Activated CD4-positive, alpha-beta memory T cell treated with anti-CD3 and anti-CD28 coated beads, Interleukin-2, amount 10 ng/mL, durations not matched to agents 7 days and 5 days (primary cell): ENCODE measurements at regions of chr2 and their contacts with region 1.

Region 1: GRCh38 chr2:197209742-197210408 is 100.7 kb downstream of the ANKRD44 start:
- DNase-seq: peak; percentile 57
- H3K4me3 Mint-ChIP-seq: peak overlapping the region; percentile 15
- H3K27ac Mint-ChIP-seq: peak overlapping the region; percentile 91
- H3K4me1 Mint-ChIP-seq: peaks cover 96% of the 10 kb centered on the region
- H3K27me3 Mint-ChIP-seq: no peaks in the 10 kb centered on the region

Region 2: DNA sequence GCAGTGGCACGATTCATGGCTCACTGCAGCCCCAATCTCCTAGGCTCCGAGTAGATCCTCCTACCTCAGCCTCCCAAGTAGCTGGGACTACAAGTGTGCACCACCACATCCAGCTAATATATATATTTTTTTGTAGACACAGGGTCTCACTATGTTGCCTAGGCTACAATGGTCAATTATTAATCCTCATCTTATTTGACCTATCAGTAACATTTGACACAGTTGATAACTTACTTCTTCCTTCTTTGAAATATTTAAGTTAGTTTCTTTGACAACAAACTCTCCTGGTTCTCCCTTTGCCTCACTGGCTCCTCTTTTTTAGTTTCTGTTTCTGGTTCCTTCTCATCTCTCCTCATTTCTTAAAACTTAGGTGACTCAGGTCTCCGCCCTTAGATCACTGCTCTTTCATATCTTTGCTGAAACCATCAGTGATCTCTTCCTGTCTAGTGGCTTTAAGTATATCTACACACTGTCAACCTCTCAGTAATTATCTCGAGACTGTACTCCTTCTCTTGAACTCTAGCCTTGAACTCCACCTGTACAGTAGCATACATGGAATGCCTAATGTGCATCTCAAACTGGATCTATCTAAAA is 294.9 kb before region 1 on chr2:
- CTCF ChIA-PET with region 1: no interaction called
- POLR2A ChIA-PET with region 1: no interaction called
- DNase-seq: no peak
- H3K4me3 Mint-ChIP-seq: peak overlapping the region; percentile 55
- H3K27ac Mint-ChIP-seq: peak overlapping the region; percentile 95
- H3K4me1 Mint-ChIP-seq: peaks cover 54% of the 10 kb centered on the region
- H3K27me3 Mint-ChIP-seq: no peaks in the 10 kb centered on the region

Region 3: GRCh38 chr2:196926562-196927375 is 283.1 kb before region 1 on chr2 and contains the start of gene PGAP1:
- CTCF ChIA-PET with region 1: no interaction called
- POLR2A ChIA-PET with region 1: no interaction called
- DNase-seq: peak; percentile 89
- H3K4me3 Mint-ChIP-seq: peak within 1 kb of the TSS; percentile 93
- H3K27ac Mint-ChIP-seq: peak within 1 kb of the TSS; percentile 99
- H3K4me1 Mint-ChIP-seq: peaks cover 37% of the 10 kb centered on the region
- H3K27me3 Mint-ChIP-seq: no peaks in the 10 kb centered on the region
- total RNA-seq, gene PGAP1: 53.6 to 63.6 TPM

Region 4: GRCh38 chr2:197191177-197191939 is 18.5 kb before region 1 on chr2:
- CTCF ChIA-PET with region 1: interaction called, 17 read pairs
- POLR2A ChIA-PET with region 1: interaction called, 123 read pairs
- DNase-seq: no peak
- H3K4me3 Mint-ChIP-seq: no peak overlapping the region
- H3K27ac Mint-ChIP-seq: peak overlapping the region; percentile 32
- H3K4me1 Mint-ChIP-seq: peaks cover 72% of the 10 kb centered on the region
- H3K27me3 Mint-ChIP-seq: no peaks in the 10 kb centered on the region

Region 5: GRCh38 chr2:197198890-197199289 is 11.0 kb before region 1 on chr2:
- CTCF ChIA-PET with region 1: interaction called, 10 read pairs
- POLR2A ChIA-PET with region 1: interaction called, 123 read pairs
- DNase-seq: peak; percentile 94
- H3K4me3 Mint-ChIP-seq: peak overlapping the region; percentile 79
- H3K27ac Mint-ChIP-seq: peak overlapping the region; percentile 96
- H3K4me1 Mint-ChIP-seq: peaks cover 85% of the 10 kb centered on the region
- H3K27me3 Mint-ChIP-seq: no peaks in the 10 kb centered on the region

Region 6: GRCh38 chr2:197239434-197239833 is 29.6 kb after region 1 on chr2:
- CTCF ChIA-PET with region 1: interaction called, 5 read pairs
- POLR2A ChIA-PET with region 1: interaction called, 13 read pairs
- DNase-seq: no peak
- H3K4me3 Mint-ChIP-seq: peak overlapping the region; percentile 73
- H3K27ac Mint-ChIP-seq: peak overlapping the region; percentile 89
- H3K4me1 Mint-ChIP-seq: peaks cover 85% of the 10 kb centered on the region
- H3K27me3 Mint-ChIP-seq: no peaks in the 10 kb centered on the region

Region 7: DNA sequence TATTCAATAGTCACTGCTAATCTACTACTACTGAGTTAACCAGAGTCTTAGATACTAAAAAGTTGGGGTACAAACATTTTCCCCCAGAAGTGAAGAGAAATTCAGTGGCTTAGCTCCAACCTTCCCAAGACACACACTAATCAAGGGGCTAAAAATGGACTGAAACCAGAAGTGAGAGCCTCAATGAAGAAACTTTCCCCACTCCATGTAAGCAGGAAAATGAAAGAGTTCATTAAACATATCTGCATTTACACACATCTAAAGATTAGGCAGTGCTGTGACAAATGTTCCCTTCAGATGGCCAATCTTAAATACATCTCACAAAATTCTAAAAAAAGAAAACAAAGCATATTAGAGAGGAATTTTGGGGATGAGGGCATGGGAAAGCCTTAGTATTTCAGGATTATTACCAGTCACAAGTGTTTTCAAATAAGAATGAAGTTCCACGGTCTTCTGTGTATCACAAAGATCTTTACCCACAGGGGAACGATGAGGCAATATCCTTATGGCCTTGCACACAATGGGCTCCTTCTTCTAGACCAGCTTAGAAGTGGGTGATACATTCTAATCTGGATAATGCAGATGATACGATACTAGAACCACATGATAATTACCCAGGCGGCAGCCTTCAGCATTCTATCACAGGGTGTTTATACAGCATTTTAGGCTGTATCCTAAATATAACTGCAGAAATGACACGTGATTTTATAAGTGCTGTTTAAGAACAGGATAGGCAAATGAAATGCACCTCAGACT is 83.6 kb after region 1 on chr2:
- CTCF ChIA-PET with region 1: no interaction called
- POLR2A ChIA-PET with region 1: interaction called, 16 read pairs
- DNase-seq: peak; percentile 32
- H3K4me3 Mint-ChIP-seq: peak overlapping the region; percentile 73
- H3K27ac Mint-ChIP-seq: peak overlapping the region; percentile 96
- H3K4me1 Mint-ChIP-seq: peaks cover 90% of the 10 kb centered on the region
- H3K27me3 Mint-ChIP-seq: no peaks in the 10 kb centered on the region

Region 8: GRCh38 chr2:197378494-197379307 is 168.8 kb after region 1 on chr2:
- CTCF ChIA-PET with region 1: no interaction called
- POLR2A ChIA-PET with region 1: no interaction called
- DNase-seq: peak; percentile 65
- H3K4me3 Mint-ChIP-seq: no peak overlapping the region
- H3K27ac Mint-ChIP-seq: no peak overlapping the region
- H3K4me1 Mint-ChIP-seq: peaks cover 20% of the 10 kb centered on the region
- H3K27me3 Mint-ChIP-seq: peaks cover 5% of the 10 kb centered on the region